GM23248 (cell line): ENCODE measurements at regions of chrX and their contacts with region 1.

Region 1: GRCh38 chrX:41116948-41117347 is 31.7 kb downstream of the USP9X start:
- DNase-seq: no peak
- H3K4me3 ChIP-seq: 0 out of 2 replicates have a peak overlapping the region, but pooled peaks have one; percentile 15
- H3K27ac ChIP-seq: no peak overlapping the region
- H3K4me1 ChIP-seq: peaks cover 21% of the 10 kb centered on the region
- H3K27me3 ChIP-seq: no peaks in the 10 kb centered on the region

Region 2: DNA sequence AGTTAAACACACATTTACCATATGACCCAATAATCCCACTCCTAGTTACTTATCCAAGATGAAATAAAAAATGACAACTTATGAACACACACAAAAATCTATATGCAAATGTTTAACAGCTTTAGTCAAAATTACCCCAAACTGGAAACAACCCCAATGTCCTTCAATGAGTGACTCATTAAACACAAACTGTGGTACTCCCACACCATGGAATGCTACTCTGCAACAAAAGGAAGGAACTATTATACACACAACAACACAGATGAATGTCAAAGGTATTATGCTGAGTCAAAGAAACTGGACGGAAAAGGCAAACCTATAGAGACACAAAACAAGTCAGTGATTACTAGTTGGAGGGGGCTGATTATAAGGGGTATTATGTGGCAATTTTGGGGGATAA is 422.1 kb before region 1 on chrX:
- in situ Hi-C with region 1: loop called (anchors 25 kb)
- DNase-seq: peak; percentile 11
- H3K4me3 ChIP-seq: no peak overlapping the region
- H3K27ac ChIP-seq: no peak overlapping the region
- H3K4me1 ChIP-seq: no peaks in the 10 kb centered on the region
- H3K27me3 ChIP-seq: no peaks in the 10 kb centered on the region

Region 3: GRCh38 chrX:40945361-40945713 is 171.6 kb before region 1 on chrX:
- in situ Hi-C with region 1: loop called (anchors 25 kb)
- DNase-seq: peak; percentile 81
- H3K4me3 ChIP-seq: peak overlapping the region; percentile 21; the same call in 1 of the 2 replicates
- H3K27ac ChIP-seq: 0 out of 2 replicates have a peak overlapping the region, but pooled peaks have one; percentile 30
- H3K4me1 ChIP-seq: peaks cover 12% of the 10 kb centered on the region
- H3K27me3 ChIP-seq: no peaks in the 10 kb centered on the region

Region 4: GRCh38 chrX:41350976-41351569 is 234.1 kb after region 1 on chrX:
- in situ Hi-C with region 1: no loop called
- DNase-seq: peak; percentile 22
- H3K4me3 ChIP-seq: no peak overlapping the region
- H3K27ac ChIP-seq: no peak overlapping the region; the same call in 1 of the 2 replicates
- H3K4me1 ChIP-seq: peaks cover 13% of the 10 kb centered on the region
- H3K27me3 ChIP-seq: no peaks in the 10 kb centered on the region

Region 5: GRCh38 chrX:41655631-41656030 is 538.7 kb after region 1 on chrX:
- in situ Hi-C with region 1: no loop called
- DNase-seq: peak; percentile 52
- H3K4me3 ChIP-seq: no peak overlapping the region
- H3K27ac ChIP-seq: 0 out of 2 replicates have a peak overlapping the region, but pooled peaks have one; percentile 15
- H3K4me1 ChIP-seq: no peaks in the 10 kb centered on the region
- H3K27me3 ChIP-seq: no peaks in the 10 kb centered on the region

Region 6: DNA sequence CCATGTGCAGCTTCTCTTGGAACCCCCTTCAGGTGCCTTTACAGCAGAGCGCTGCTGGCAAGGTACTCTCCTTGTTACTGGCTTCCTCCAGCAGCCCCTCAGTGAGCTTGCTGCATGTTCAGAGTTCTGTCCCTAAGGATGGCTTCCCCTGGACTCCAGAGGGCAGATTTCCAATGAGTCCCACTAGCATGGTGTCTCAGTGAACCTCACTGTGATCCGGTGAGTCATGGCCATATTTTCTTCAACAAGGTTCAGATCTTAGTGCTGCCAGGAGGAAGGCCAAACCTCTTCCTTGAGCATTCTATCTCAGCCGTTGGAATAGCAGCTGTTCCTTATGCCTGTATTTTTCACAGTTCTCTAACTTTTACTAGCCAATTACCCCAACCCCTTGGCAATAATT is 707.6 kb after region 1 on chrX:
- in situ Hi-C with region 1: no loop called
- DNase-seq: peak; percentile 65
- H3K4me3 ChIP-seq: no peak overlapping the region
- H3K27ac ChIP-seq: no peak overlapping the region
- H3K4me1 ChIP-seq: peaks cover 37% of the 10 kb centered on the region
- H3K27me3 ChIP-seq: no peaks in the 10 kb centered on the region